Left lung (tissue), 14 donors: ENCODE measurements at regions of chr3 and their contacts with region 1.

Region 1: DNA sequence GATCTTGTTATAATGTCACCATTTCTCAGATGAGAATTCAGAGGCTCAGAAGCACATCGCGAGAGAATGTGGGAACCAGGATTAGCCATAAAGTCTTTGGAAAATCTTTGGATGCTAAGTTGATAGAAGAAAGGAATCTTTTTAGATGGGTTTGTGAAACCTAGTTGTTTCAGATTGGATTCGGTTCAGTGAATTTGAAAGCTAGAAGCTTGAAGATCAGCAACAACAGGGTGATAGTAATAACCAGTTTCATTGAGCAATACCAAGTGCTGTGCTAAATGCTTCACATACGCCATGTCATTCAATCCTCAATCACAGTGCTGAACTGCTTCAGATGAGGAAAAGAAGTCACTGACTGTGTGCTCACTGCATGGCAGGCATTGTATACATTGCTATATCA is 47.4 kb upstream of the MITF start:
- DNase-seq: no peak
- ATAC-seq: no peak
- H3K4me3 ChIP-seq: no peak overlapping the region
- H3K27ac ChIP-seq: no peak overlapping the region
- H3K4me1 ChIP-seq: no peaks in the 10 kb centered on the region
- H3K27me3 ChIP-seq: no peaks in the 10 kb centered on the region
- CTCF ChIP-seq: no peak

Region 2: GRCh38 chr3:69532544-69533224 is 159.2 kb before region 1 on chr3:
- intact Hi-C with region 1: no loop called
- DNase-seq: no peak
- ATAC-seq: no peak
- H3K4me3 ChIP-seq: no peak overlapping the region
- H3K27ac ChIP-seq: no peak overlapping the region
- H3K4me1 ChIP-seq: no peaks in the 10 kb centered on the region
- H3K27me3 ChIP-seq: no peaks in the 10 kb centered on the region
- CTCF ChIP-seq: no peak

Region 3: GRCh38 chr3:69791919-69792399 is 100.1 kb after region 1 on chr3:
- intact Hi-C with region 1: loop called in 1 of 2 experiments (anchors 10 kb)
- DNase-seq: peak in 2 of 4 donors; percentile 52 to 61
- ATAC-seq: peak; percentile 72
- H3K4me3 ChIP-seq: no peak overlapping the region
- H3K27ac ChIP-seq: peak overlapping the region; percentile 43 to 64
- H3K4me1 ChIP-seq: peaks cover 17 to 23% of the 10 kb centered on the region in 2 donors
- H3K27me3 ChIP-seq: no peaks in the 10 kb centered on the region
- CTCF ChIP-seq: peak in 1 of 2 donors; percentile 30

Region 4: DNA sequence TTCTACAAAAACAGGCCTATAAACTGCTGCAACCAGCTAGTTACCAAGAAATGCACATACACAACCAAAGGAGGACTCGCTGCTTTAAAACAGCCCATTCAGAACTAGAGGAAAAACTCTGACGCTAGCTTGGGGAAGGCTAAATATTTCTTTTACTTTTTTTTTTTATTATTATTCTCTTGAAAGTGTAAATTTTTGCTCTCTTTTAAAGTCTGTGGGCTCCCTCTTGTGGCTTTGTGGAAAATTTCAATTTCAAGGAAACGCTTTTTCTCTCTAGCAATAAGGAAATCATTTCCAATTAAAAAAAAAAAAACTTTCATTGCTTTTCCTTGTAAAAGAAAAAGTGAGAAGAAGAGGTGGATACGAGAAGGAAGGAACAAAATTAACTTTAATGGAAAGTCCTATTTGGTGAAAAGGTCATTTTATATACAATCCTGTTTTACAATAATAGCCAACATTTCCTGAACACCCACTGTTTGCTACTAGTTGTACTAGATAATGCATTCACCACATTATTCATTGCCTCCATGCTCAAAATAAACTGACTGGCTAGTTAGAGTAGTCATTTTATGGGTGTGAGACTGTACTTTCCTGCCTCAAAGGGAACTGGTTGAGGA is 256.5 kb after region 1 on chr3:
- intact Hi-C with region 1: loop called in 1 of 2 experiments (anchors 10 kb)
- DNase-seq: peak in 2 of 4 donors; percentile 39 to 56
- ATAC-seq: peak; percentile 57
- H3K4me3 ChIP-seq: no peak overlapping the region
- H3K27ac ChIP-seq: no peak overlapping the region
- H3K4me1 ChIP-seq: no peaks in the 10 kb centered on the region
- H3K27me3 ChIP-seq: no peaks in the 10 kb centered on the region
- CTCF ChIP-seq: peak; percentile 36 to 57